Transverse colon (tissue), 4 donors: ENCODE measurements at regions of chr1 and their contacts with region 1.

Region 1: DNA sequence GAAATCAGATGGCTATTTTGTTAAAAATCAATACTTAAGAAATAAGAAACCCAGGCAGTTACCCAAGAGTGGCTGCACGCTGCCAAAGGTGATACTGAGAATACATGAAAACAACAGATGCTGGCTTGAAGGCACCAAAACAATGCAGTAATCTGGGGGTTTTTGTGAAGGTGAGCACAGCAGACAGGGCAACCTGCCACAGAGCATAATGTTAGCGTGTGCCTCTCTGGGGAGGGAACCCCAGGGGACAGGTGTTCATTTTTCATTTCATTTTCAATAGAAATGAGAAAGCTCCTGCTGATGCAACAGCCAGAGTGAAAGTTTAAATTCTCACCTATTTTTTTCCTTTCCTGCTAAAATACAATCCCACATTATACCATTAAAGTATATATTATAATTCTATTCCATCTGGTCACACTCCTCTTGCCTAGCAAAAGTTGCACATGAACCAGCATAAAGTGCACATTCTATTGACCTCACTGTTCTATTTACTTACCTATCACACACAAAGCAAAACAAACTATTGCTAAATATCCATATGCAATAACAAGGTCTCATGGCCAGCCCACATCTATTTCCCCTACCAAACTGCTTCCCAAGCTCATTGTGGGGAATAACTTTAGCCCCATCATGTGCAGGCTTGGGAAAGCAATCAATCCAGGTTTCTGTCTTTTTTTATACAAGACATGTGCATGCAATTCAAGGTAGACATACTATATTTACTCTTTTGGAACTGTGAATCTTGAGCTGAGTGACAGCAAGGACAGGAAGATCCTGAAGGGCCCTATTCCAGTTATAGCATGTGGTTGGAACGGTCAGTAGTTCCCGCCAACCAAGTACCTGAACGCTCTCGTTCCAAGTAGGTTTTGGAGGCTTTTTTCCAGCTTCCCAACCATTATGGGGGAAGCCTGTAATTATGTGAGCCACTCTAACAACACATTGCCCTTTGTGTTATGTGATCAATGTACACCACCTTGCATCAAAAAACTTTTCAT is 173.6 kb downstream of the RERE start:
- DNase-seq: peak; percentile 17
- H3K4me3 ChIP-seq: no peak overlapping the region
- H3K27ac ChIP-seq: no peak overlapping the region
- H3K4me1 ChIP-seq: peaks cover 0 to 20% (median 0%) of the 10 kb centered on the region in 4 donors
- H3K27me3 ChIP-seq: no peaks in the 10 kb centered on the region
- CTCF ChIP-seq: no peak
- EP300 ChIP-seq: no peak
- POLR2A ChIP-seq: no peak

Region 2: DNA sequence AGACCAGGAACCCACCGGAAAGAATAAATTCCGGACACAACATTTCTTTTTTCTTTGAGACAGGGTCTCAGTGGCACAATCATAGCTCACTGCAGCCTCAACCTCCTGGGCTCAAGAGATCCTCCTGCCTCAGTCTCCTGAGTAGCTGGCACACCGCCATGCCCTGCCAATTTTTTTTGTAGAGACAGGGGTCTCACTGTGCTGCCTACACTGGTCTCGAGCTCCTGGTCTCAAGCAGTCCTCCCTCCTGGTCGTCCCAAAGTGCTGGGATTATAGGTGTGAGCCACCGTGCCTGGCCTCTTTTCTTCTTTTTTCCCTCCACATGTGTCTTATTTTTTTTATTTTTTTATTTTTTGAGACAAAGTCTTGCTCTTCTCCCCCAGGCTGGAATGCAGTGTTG is 255.2 kb after region 1 on chr1:
- in situ Hi-C with region 1: no loop called
- intact Hi-C with region 1: no loop called
- DNase-seq: no peak
- H3K4me3 ChIP-seq: no peak overlapping the region
- H3K27ac ChIP-seq: no peak overlapping the region
- H3K4me1 ChIP-seq: peaks cover 0 to 5% (median 0%) of the 10 kb centered on the region in 4 donors
- H3K27me3 ChIP-seq: no peaks in the 10 kb centered on the region
- CTCF ChIP-seq: no peak
- EP300 ChIP-seq: no peak
- POLR2A ChIP-seq: no peak

Region 3: GRCh38 chr1:9145021-9145668 is 501.3 kb after region 1 on chr1:
- in situ Hi-C with region 1: no loop called
- intact Hi-C with region 1: loop called (anchors 5 kb)
- DNase-seq: no peak
- H3K4me3 ChIP-seq: no peak overlapping the region
- H3K27ac ChIP-seq: no peak overlapping the region
- H3K4me1 ChIP-seq: peaks cover 0 to 5% (median 0%) of the 10 kb centered on the region in 4 donors
- H3K27me3 ChIP-seq: no peaks in the 10 kb centered on the region
- CTCF ChIP-seq: no peak
- EP300 ChIP-seq: no peak
- POLR2A ChIP-seq: no peak